CD4-positive, alpha-beta memory T cell (primary cell): ENCODE measurements at regions of chr10 and their contacts with region 1.

Region 1: GRCh38 chr10:110746254-110746826 is 102.2 kb downstream of the RBM20 start:
- DNase-seq: peak in 4 of 5 donors; percentile 44 to 58 (median 50)
- H3K4me3 ChIP-seq: no peak overlapping the region
- H3K4me3 Mint-ChIP-seq: peak overlapping the region in 1 of 8 donors; percentile 23
- H3K27ac ChIP-seq: no peak overlapping the region
- H3K27ac Mint-ChIP-seq: peak overlapping the region in 6 of 7 donors; percentile 20 to 71 (median 42)
- H3K4me1 ChIP-seq: peaks cover 47% of the 10 kb centered on the region
- H3K4me1 Mint-ChIP-seq: peaks cover 42 to 72% (median 56%) of the 10 kb centered on the region in 4 donors
- H3K27me3 ChIP-seq: no peaks in the 10 kb centered on the region
- H3K27me3 Mint-ChIP-seq: no peaks in the 10 kb centered on the region

Region 2: DNA sequence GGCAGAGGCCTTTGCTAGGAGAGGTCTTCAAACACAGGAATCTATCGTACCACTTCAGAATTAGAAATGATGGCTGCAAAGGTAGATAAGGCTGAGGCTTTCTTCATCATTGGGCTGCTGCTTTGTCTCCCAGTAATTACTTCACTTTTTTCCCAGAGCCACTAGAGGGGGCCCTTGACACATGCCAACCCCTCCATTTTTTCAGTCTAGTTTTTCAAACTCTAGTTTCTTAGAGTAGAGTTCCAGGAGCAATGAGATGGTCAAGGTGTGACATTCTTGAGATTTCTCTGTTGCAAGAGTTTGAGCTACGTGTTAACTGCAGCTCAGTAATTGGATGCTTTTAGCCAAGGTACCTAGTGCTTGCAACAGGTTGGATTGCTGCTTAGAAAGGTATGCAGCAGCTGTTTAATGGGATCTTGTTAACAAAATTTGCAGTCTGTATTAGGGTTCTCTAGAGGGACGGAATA is 136.0 kb before region 1 on chr10:
- CTCF ChIA-PET with region 1: no interaction called
- POLR2A ChIA-PET with region 1: interaction called, 3 read pairs
- intact Hi-C with region 1: loop called (anchors 1 kb)
- DNase-seq: peak; percentile 56 to 70 (median 63)
- H3K4me3 ChIP-seq: no peak overlapping the region
- H3K4me3 Mint-ChIP-seq: no peak overlapping the region
- H3K27ac ChIP-seq: no peak overlapping the region
- H3K27ac Mint-ChIP-seq: no peak overlapping the region
- H3K4me1 ChIP-seq: no peaks in the 10 kb centered on the region
- H3K4me1 Mint-ChIP-seq: peaks cover 0 to 17% (median 7%) of the 10 kb centered on the region in 4 donors
- H3K27me3 ChIP-seq: no peaks in the 10 kb centered on the region
- H3K27me3 Mint-ChIP-seq: no peaks in the 10 kb centered on the region

Region 3: GRCh38 chr10:110671788-110672579 is 74.4 kb before region 1 on chr10:
- CTCF ChIA-PET with region 1: interaction called, 13 read pairs
- POLR2A ChIA-PET with region 1: no interaction called
- intact Hi-C with region 1: no loop called
- DNase-seq: peak; percentile 45 to 68 (median 58)
- H3K4me3 ChIP-seq: peak overlapping the region; percentile 60 to 61
- H3K4me3 Mint-ChIP-seq: peak overlapping the region; percentile 88 to 92 (median 90)
- H3K27ac ChIP-seq: peak overlapping the region; percentile 3
- H3K27ac Mint-ChIP-seq: peak overlapping the region in 6 of 7 donors; percentile 45 to 88 (median 76)
- H3K4me1 ChIP-seq: no peaks in the 10 kb centered on the region
- H3K4me1 Mint-ChIP-seq: peaks cover 1 to 8% (median 5%) of the 10 kb centered on the region in 4 donors
- H3K27me3 ChIP-seq: no peaks in the 10 kb centered on the region
- H3K27me3 Mint-ChIP-seq: peaks cover 4 to 7% of the 10 kb centered on the region in 2 donors

Region 4: GRCh38 chr10:110857265-110858158 is 111.2 kb after region 1 on chr10:
- CTCF ChIA-PET with region 1: interaction called, 13 read pairs
- POLR2A ChIA-PET with region 1: interaction called, 7 read pairs
- intact Hi-C with region 1: no loop called
- DNase-seq: peak in 4 of 5 donors; percentile 51 to 71 (median 56)
- H3K4me3 ChIP-seq: no peak overlapping the region
- H3K4me3 Mint-ChIP-seq: peak overlapping the region in 7 of 8 donors; percentile 53 to 89 (median 72)
- H3K27ac ChIP-seq: peak overlapping the region; percentile 57
- H3K27ac Mint-ChIP-seq: peak overlapping the region; percentile 91 to 99 (median 97)
- H3K4me1 ChIP-seq: peaks cover 91% of the 10 kb centered on the region
- H3K4me1 Mint-ChIP-seq: peaks cover 67 to 92% (median 79%) of the 10 kb centered on the region in 4 donors
- H3K27me3 ChIP-seq: no peaks in the 10 kb centered on the region
- H3K27me3 Mint-ChIP-seq: no peaks in the 10 kb centered on the region

Region 5: DNA sequence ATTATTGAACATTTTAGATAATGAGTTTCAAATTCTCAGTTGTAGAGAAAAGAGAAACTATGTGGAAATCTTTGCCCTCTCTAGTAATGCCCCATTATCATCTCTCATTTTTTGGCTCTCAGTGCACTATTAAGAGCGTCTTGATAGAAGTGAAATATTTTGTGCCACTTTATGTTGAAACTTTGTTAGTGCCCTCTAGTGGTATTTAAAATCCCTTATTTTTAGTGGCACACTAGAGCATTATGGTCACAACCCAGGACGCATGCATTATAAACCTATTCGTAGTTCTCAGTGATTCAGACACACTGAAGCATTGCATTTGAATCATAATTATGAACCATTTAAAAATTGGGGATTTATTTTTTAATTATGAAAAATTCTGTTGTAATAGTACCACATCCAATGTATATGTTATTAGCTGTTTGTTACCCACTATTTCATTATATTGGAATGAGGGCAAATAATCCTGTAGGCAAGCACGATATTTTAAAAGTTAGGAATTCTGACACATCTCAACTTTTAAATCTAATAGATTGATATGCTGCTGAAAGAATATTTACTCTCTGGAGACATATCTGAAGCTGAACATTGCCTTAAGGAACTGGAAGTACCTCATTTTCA is 147.3 kb after region 1 on chr10:
- CTCF ChIA-PET with region 1: interaction called, 42 read pairs
- POLR2A ChIA-PET with region 1: interaction called, 7 read pairs
- intact Hi-C with region 1: loop called (anchors 1 kb)
- DNase-seq: peak in 4 of 5 donors; percentile 60 to 66 (median 64)
- H3K4me3 ChIP-seq: no peak overlapping the region
- H3K4me3 Mint-ChIP-seq: no peak overlapping the region
- H3K27ac ChIP-seq: peak overlapping the region; percentile 6
- H3K27ac Mint-ChIP-seq: peak overlapping the region in 4 of 7 donors; percentile 0 to 43 (median 36)
- H3K4me1 ChIP-seq: peaks cover 49% of the 10 kb centered on the region
- H3K4me1 Mint-ChIP-seq: peaks cover 28 to 64% (median 50%) of the 10 kb centered on the region in 4 donors
- H3K27me3 ChIP-seq: no peaks in the 10 kb centered on the region
- H3K27me3 Mint-ChIP-seq: no peaks in the 10 kb centered on the region

Region 6: DNA sequence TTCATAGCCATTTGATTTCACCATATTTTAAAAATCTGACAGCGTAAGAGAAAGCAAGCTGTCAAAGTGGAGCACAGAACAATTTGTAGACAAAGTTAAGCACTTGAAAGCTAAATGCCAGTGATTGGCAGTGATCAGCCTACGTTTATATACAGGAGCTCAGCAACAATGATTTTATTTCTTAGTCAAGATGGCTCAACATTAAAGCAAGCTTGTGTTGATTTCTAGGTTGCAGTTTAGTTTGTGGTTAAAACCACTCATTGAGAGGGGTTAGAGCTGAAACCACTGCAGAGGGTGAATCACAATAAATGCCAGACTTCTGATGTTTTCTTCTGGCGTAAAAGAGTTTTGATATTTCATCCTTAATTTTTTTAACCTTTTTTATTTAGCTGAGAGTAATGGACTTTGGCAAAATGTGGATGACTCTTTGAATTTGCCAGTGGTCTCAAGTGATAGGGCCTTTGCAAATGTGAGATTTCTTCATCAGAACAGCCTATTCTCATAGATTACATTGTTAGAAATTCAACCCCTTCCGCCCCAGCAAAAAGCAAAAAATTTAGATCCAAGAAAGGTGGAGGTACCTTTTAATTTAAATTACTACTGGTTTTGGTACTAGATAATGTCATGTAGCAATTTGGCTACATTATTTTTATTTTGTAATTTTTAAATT is 246.8 kb after region 1 on chr10:
- CTCF ChIA-PET with region 1: no interaction called
- POLR2A ChIA-PET with region 1: no interaction called
- intact Hi-C with region 1: loop called (anchors 5 kb)
- DNase-seq: peak; percentile 51 to 65 (median 62)
- H3K4me3 ChIP-seq: no peak overlapping the region
- H3K4me3 Mint-ChIP-seq: peak overlapping the region in 6 of 8 donors; percentile 24 to 79 (median 64)
- H3K27ac ChIP-seq: no peak overlapping the region
- H3K27ac Mint-ChIP-seq: peak overlapping the region; percentile 30 to 79 (median 61)
- H3K4me1 ChIP-seq: peaks cover 27% of the 10 kb centered on the region
- H3K4me1 Mint-ChIP-seq: peaks cover 29 to 57% (median 42%) of the 10 kb centered on the region in 4 donors
- H3K27me3 ChIP-seq: no peaks in the 10 kb centered on the region
- H3K27me3 Mint-ChIP-seq: no peaks in the 10 kb centered on the region

Region 7: GRCh38 chr10:111360260-111360925 is 614.1 kb after region 1 on chr10:
- CTCF ChIA-PET with region 1: no interaction called
- POLR2A ChIA-PET with region 1: no interaction called
- intact Hi-C with region 1: loop called (anchors 2 kb)
- DNase-seq: peak in 1 of 5 donors; percentile 2
- H3K4me3 ChIP-seq: no peak overlapping the region
- H3K4me3 Mint-ChIP-seq: no peak overlapping the region
- H3K27ac ChIP-seq: no peak overlapping the region
- H3K27ac Mint-ChIP-seq: no peak overlapping the region
- H3K4me1 ChIP-seq: no peaks in the 10 kb centered on the region
- H3K4me1 Mint-ChIP-seq: no peaks in the 10 kb centered on the region
- H3K27me3 ChIP-seq: no peaks in the 10 kb centered on the region
- H3K27me3 Mint-ChIP-seq: peaks cover 8 to 9% of the 10 kb centered on the region in 2 donors